PC-3 (cell line): ENCODE measurements at regions of chr2 and their contacts with region 1.

Region 1: GRCh38 chr2:223797811-223798721 is 39.3 kb downstream of the AP1S3 start:
- DNase-seq: peak; percentile 69
- ATAC-seq: peak; percentile 13
- H3K4me3 ChIP-seq: peak overlapping the region; percentile 39; the same call in 1 of the 2 replicates
- H3K27ac ChIP-seq: peak overlapping the region; percentile 97
- H3K4me1 ChIP-seq: peaks cover 70% of the 10 kb centered on the region
- H3K27me3 ChIP-seq: no peaks in the 10 kb centered on the region
- CTCF ChIP-seq: peak; percentile 84

Region 2: GRCh38 chr2:223247136-223247535 is 550.9 kb before region 1 on chr2:
- CTCF ChIA-PET with region 1: no interaction called
- POLR2A ChIA-PET with region 1: no interaction called
- intact Hi-C with region 1: loop called (anchors 10 kb)
- DNase-seq: peak; percentile 50
- ATAC-seq: peak; percentile 53
- H3K4me3 ChIP-seq: no peak overlapping the region
- H3K27ac ChIP-seq: no peak overlapping the region
- H3K4me1 ChIP-seq: no peaks in the 10 kb centered on the region
- H3K27me3 ChIP-seq: peaks cover 3% of the 10 kb centered on the region; the same call in 1 of the 2 replicates
- CTCF ChIP-seq: peak; percentile 78

Region 3: GRCh38 chr2:223549215-223549614 is 248.9 kb before region 1 on chr2:
- CTCF ChIA-PET with region 1: no interaction called
- POLR2A ChIA-PET with region 1: no interaction called
- intact Hi-C with region 1: loop called (anchors 5 kb)
- DNase-seq: peak; percentile 98
- ATAC-seq: peak; percentile 80
- H3K4me3 ChIP-seq: peak overlapping the region; percentile 30; the same call in 1 of the 2 replicates
- H3K27ac ChIP-seq: peak overlapping the region; percentile 90
- H3K4me1 ChIP-seq: peaks cover 54% of the 10 kb centered on the region
- H3K27me3 ChIP-seq: no peaks in the 10 kb centered on the region
- CTCF ChIP-seq: no peak

Region 4: GRCh38 chr2:223674998-223675609 is 123.0 kb before region 1 on chr2:
- CTCF ChIA-PET with region 1: interaction called, 3 read pairs
- POLR2A ChIA-PET with region 1: no interaction called
- intact Hi-C with region 1: loop called (anchors 1 kb)
- DNase-seq: peak; percentile 61
- ATAC-seq: peak; percentile 89
- H3K4me3 ChIP-seq: no peak overlapping the region
- H3K27ac ChIP-seq: no peak overlapping the region
- H3K4me1 ChIP-seq: 0 out of 2 replicates have a peak, but pooled peaks cover 3% of the 10 kb centered on the region
- H3K27me3 ChIP-seq: no peaks in the 10 kb centered on the region
- CTCF ChIP-seq: peak; percentile 85

Region 5: DNA sequence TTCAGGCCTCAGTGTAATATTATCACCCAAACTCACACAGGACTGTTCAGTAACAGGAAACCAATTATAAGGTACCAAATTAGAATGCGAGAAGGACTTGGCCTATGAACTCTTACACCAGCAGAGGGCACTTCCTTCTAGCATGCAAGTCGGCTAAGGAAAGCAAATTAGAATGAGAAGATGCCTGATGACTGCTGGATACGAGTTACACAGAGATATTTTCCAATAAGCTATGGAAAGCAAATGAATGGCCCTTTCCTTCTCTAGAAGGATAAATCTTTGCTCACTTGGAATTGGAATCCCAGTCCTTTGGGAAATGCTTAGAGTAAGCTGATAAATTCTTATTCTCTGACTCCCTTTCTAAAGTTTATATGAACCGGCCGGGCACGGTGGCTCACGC is 70.5 kb before region 1 on chr2:
- CTCF ChIA-PET with region 1: interaction called, 8 read pairs
- POLR2A ChIA-PET with region 1: no interaction called
- intact Hi-C with region 1: loop called (anchors 1 kb)
- DNase-seq: peak; percentile 69
- ATAC-seq: peak; percentile 40
- H3K4me3 ChIP-seq: no peak overlapping the region
- H3K27ac ChIP-seq: peak overlapping the region; percentile 24
- H3K4me1 ChIP-seq: peaks cover 28% of the 10 kb centered on the region
- H3K27me3 ChIP-seq: no peaks in the 10 kb centered on the region
- CTCF ChIP-seq: peak; percentile 83

Region 6: DNA sequence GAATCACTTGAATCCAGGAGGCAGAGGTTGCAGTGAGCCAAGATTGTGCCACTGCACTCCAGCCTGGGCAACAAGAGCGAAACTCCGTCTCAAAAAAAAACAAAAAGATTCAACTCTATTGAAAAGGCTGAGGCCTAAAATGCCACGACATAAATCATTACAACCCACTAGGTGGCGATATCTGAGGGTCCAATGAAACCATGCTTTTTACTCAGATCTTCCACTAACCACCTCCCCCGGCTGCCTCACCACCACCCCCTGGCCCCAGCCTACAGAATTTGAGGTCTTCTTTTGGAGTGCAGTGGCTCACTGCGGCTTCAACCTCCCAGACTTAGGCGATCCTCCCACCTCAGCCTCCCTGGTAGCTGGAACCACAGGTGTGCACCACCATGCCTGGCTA is 18.2 kb before region 1 on chr2:
- CTCF ChIA-PET with region 1: interaction called, 4 read pairs
- POLR2A ChIA-PET with region 1: no interaction called
- intact Hi-C with region 1: loop called (anchors 1 kb)
- DNase-seq: peak; percentile 84
- ATAC-seq: peak; percentile 80
- H3K4me3 ChIP-seq: no peak overlapping the region
- H3K27ac ChIP-seq: no peak overlapping the region
- H3K4me1 ChIP-seq: no peaks in the 10 kb centered on the region
- H3K27me3 ChIP-seq: no peaks in the 10 kb centered on the region
- CTCF ChIP-seq: peak; percentile 60

Region 7: DNA sequence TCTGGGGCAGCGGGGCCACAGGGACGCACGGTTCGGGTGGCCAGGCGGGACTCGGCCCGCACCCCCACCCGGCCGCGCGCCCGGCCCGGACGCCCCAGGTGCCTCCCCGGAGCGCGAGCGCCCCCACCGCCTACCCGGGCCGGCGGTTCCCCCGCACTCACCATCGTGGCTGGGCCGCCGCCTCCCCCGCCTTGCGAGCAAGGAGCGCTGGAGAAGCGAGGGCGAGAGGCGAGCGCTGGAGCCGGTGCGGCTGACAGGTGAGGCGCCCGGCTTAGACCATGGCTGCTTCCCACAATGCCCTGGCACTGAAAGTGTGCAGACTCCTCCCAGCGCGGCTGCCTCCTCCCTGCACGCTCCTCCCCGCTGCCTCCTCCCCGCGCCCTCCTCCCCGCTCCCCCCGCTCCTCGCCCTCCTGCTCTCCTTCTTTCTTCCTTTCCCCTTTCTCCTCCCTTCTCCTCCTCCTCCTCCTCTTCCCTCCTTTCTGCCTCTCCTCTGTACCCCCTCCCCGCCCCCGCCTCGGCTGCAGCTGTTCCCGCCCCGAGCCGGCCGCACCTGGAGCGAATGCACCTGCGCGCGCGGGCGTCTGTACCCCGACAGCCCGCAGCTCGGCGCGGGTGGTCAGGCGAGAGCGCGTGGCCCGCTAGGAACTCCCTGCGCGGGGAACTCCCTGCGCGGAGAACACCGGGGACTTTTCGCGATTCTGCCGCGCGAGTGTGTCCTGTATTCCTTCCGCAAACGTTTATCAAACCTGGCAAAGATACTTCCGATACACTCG is 39.4 kb after region 1 on chr2 and contains the start of gene AP1S3:
- CTCF ChIA-PET with region 1: interaction called, 3 read pairs
- POLR2A ChIA-PET with region 1: interaction called, 7 read pairs
- intact Hi-C with region 1: loop called (anchors 1 kb)
- DNase-seq: peak; percentile 84
- ATAC-seq: peak; percentile 87
- H3K4me3 ChIP-seq: peak within 1 kb of the TSS; percentile 95
- H3K27ac ChIP-seq: peak within 1 kb of the TSS; percentile 71
- H3K4me1 ChIP-seq: peaks cover 27% of the 10 kb centered on the region; the same call in 1 of the 2 replicates
- H3K27me3 ChIP-seq: no peaks in the 10 kb centered on the region
- CTCF ChIP-seq: no peak
- total RNA-seq, gene AP1S3: 34.3 and 37.6 TPM in 2 replicates